ENCODE measurements at regions of chr9 and their contacts with region 1.

Region 1: GRCh38 chr9:7405924-7406604 is 393.5 kb downstream of the DMAC1 start:
- DNase-seq: no peak
- H3K4me3 ChIP-seq: no peak overlapping the region
- H3K27ac ChIP-seq: no peak overlapping the region
- H3K4me1 ChIP-seq: no peaks in the 10 kb centered on the region
- H3K27me3 ChIP-seq: no peaks in the 10 kb centered on the region
- CTCF ChIP-seq: no peak
- POLR2A ChIP-seq: no peak

Region 2: DNA sequence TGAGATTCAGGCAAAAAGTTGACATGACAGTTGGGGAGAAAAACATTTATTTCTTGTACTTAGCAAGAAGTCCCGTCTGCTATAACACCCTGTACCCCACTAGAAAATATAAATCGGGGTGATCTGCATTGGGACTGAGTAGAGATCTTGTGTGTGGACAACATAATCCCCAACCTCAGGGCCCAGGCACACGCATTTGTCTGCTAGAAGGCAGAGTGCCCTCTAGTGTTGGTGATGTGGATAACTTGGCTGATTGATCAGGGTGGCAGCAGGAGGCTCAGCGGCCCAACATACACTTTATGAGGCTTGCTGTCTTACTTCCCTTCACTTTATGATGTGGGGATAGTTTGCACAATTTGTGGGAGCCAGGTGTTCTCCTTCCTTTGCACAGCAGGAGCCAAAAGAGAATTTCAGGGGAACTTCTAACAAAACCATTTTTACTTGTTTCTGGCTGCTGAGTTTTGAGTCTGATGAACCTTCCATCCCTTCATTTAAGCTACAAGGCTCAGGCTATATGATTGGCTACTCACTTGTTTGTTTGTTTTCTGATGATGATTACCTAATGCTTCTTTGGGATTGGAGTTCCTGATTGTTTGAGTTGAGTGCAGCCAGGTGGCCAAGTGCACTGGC is 130.4 kb after region 1 on chr9:
- intact Hi-C with region 1: loop called (anchors 10 kb)
- DNase-seq: no peak
- H3K4me3 ChIP-seq: no peak overlapping the region
- H3K27ac ChIP-seq: no peak overlapping the region
- H3K4me1 ChIP-seq: no peaks in the 10 kb centered on the region
- H3K27me3 ChIP-seq: no peaks in the 10 kb centered on the region
- CTCF ChIP-seq: peak; percentile 25 to 65 (median 44)
- POLR2A ChIP-seq: no peak